GM12878 (cell line): ENCODE measurements at regions of chr4 and their contacts with region 1.

Region 1: GRCh38 chr4:25258981-25259578 is 25.2 kb downstream of the PI4K2B start:
- DNase-seq: no peak
- ATAC-seq: no peak
- H3K4me3 ChIP-seq: no peak overlapping the region
- H3K27ac ChIP-seq: no peak overlapping the region
- H3K4me1 ChIP-seq: no peaks in the 10 kb centered on the region
- H3K27me3 ChIP-seq: no peaks in the 10 kb centered on the region
- CTCF ChIP-seq: no peak
- EP300 ChIP-seq: no peak
- POLR2A ChIP-seq: no peak
- RAD21 ChIP-seq: no peak

Region 2: GRCh38 chr4:25301471-25301870 is 42.4 kb after region 1 on chr4:
- CTCF ChIA-PET with region 1: no interaction called
- POLR2A ChIA-PET with region 1: no interaction called
- RAD21 ChIA-PET with region 1: no interaction called
- SMC1A ChIA-PET with region 1: no interaction called
- in situ Hi-C with region 1: no loop called
- intact Hi-C with region 1: no loop called
- DNase-seq: no peak
- ATAC-seq: no peak
- H3K4me3 ChIP-seq: no peak overlapping the region
- H3K27ac ChIP-seq: no peak overlapping the region
- H3K4me1 ChIP-seq: no peaks in the 10 kb centered on the region
- H3K27me3 ChIP-seq: no peaks in the 10 kb centered on the region
- CTCF ChIP-seq: no peak
- EP300 ChIP-seq: no peak
- POLR2A ChIP-seq: no peak
- RAD21 ChIP-seq: no peak

Region 3: GRCh38 chr4:25358515-25359275 is 99.6 kb after region 1 on chr4:
- CTCF ChIA-PET with region 1: no interaction called
- POLR2A ChIA-PET with region 1: no interaction called
- RAD21 ChIA-PET with region 1: no interaction called
- SMC1A ChIA-PET with region 1: no interaction called
- in situ Hi-C with region 1: no loop called
- intact Hi-C with region 1: loop called (anchors 5 kb)
- DNase-seq: no peak
- ATAC-seq: no peak
- H3K4me3 ChIP-seq: no peak overlapping the region
- H3K27ac ChIP-seq: no peak overlapping the region
- H3K4me1 ChIP-seq: no peaks in the 10 kb centered on the region
- H3K27me3 ChIP-seq: no peaks in the 10 kb centered on the region
- CTCF ChIP-seq: no peak
- EP300 ChIP-seq: no peak
- POLR2A ChIP-seq: no peak
- RAD21 ChIP-seq: no peak

Region 4: DNA sequence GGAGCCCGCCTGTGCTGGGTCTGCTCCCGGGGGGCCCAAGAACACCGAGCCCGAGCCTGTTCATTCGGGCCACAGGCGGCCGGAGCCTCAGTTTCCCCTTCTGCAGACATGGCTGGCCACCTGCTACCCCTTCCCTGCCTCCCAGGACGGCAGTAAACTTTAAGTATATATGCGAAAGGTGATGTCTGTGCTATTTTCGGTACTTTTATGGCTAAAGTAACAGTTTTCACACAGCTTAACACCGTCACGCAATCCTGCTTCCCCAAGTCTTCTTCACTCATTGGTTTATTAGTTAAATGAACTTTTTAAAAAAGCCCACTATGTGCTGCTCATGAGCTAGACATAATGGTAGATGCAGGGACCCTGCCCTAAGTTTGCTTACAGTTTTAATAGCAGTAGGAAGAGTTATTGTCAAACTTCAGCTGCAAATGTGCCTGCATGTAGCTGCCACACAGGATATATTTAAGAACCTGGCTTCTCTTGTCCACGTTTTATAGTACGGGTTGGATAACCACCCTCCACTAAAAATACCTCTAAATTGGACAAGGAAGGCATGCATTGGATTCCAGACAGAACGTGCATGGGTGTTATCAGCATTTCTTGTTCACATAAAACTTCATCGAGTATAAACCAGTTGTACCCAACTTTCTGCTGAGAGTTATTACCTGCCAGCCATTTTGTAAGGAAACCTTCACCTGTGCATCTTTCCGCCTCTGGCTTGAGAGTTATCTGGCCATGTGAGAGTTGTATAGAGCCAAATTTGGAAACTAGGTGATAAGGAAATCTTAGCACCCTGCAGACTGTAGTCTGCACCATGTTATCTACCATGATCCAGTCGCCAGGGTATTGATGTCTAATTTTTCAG is 118.7 kb after region 1 on chr4:
- CTCF ChIA-PET with region 1: no interaction called
- POLR2A ChIA-PET with region 1: no interaction called
- RAD21 ChIA-PET with region 1: no interaction called
- SMC1A ChIA-PET with region 1: no interaction called
- in situ Hi-C with region 1: no loop called
- intact Hi-C with region 1: no loop called
- DNase-seq: no peak
- ATAC-seq: peak; percentile 20
- H3K4me3 ChIP-seq: peak overlapping the region; percentile 96
- H3K27ac ChIP-seq: peak overlapping the region; percentile 55
- H3K4me1 ChIP-seq: no peaks in the 10 kb centered on the region
- H3K27me3 ChIP-seq: no peaks in the 10 kb centered on the region
- CTCF ChIP-seq: no peak
- EP300 ChIP-seq: no peak
- POLR2A ChIP-seq: no peak
- RAD21 ChIP-seq: no peak